ENCODE measurements at regions of chr19 and their contacts with region 1.

Region 1: GRCh38 chr19:37906869-37907734 is at the start of gene SIPA1L3:
- DNase-seq: peak; percentile 88 to 97
- H3K4me3 ChIP-seq: peak within 1 kb of the TSS; percentile 100
- H3K27ac ChIP-seq: peak within 1 kb of the TSS; percentile 67
- H3K4me1 ChIP-seq: peaks cover 18% of the 10 kb centered on the region
- H3K27me3 ChIP-seq: no peaks in the 10 kb centered on the region
- CTCF ChIP-seq: no peak
- total RNA-seq, gene SIPA1L3: 53.4 and 55.2 TPM in 2 replicates

Region 2: DNA sequence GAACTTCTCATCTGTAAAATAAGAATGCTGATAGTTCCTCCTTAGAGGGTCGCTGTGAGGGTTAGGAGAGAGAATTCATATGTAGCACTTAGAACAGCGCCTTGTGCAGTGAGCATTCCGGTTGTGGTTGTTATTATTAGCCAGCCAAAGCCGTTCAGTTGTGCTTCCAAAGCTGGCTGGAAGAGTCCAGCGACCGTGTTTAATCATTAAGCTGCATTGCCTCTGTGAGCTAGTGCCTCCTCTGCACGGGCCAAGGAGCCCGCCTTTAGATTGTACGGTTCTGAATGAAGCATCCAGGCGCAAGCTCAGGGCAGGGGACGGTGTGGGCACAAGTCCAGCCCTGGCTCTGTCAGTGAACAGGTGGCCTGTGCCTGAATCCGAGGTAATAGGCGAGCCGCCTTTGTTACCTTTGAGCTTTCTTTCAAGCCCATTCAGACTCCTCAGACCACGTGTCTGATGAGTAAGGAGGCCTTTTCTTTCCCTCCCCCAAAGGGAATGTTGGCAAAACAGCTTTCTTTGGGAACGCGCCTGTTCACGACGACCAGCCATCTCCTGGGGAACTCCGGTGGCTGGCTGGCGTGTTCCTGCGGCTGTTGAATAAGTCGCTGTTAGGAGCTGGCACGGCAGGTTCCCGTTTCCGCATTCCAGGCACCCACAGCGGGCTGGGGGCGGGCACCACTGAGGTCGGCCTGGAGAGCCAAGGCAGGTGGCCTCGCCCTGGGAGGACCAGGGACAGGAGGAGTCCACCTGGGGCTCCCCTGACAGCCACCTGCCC is 25.0 kb after region 1 on chr19:
- CTCF ChIA-PET with region 1: interaction called, 4 read pairs
- POLR2A ChIA-PET with region 1: interaction called, 9 read pairs
- intact Hi-C with region 1: loop called (anchors 1 kb)
- DNase-seq: peak; percentile 92 to 95
- H3K4me3 ChIP-seq: peak overlapping the region; percentile 44
- H3K27ac ChIP-seq: peak overlapping the region; percentile 74
- H3K4me1 ChIP-seq: peaks cover 62% of the 10 kb centered on the region
- H3K27me3 ChIP-seq: no peaks in the 10 kb centered on the region
- CTCF ChIP-seq: no peak

Region 3: DNA sequence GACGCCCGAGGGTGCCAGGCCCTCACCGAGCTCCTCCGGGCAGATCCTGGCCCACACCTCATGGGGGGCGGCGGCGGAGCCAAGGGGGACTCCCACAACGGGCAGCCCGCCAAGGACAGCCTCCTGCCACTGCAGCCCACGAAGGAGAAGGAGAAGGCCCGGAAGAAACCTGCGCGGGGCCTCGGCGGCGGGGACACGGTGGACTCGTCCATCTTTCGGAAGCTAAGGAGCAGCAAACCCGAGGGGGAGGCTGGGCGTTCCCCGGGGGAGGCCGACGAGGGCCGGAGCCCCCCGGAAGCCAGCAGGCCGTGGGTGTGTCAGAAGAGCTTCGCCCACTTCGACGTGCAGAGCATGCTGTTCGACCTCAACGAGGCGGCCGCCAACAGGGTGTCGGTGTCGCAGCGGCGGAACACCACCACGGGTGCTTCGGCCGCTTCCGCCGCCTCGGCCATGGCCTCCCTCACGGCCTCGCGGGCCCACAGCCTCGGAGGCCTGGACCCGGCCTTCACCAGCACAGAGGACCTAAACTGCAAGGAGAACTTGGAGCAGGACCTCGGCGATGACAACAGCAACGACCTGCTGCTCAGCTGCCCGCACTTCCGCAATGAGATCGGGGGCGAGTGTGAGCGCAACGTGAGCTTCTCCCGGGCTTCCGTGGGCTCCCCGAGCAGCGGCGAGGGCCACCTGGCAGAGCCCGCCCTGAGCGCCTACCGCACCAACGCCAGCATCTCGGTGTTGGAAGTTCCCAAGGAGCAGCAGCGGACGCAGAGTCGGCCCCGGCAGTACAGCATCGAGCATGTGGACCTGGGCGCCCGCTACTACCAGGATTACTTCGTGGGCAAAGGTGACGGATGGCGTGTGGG is 175.4 kb after region 1 on chr19:
- CTCF ChIA-PET with region 1: interaction called, 16 read pairs
- POLR2A ChIA-PET with region 1: no interaction called
- intact Hi-C with region 1: no loop called
- DNase-seq: no peak
- H3K4me3 ChIP-seq: no peak overlapping the region
- H3K27ac ChIP-seq: no peak overlapping the region
- H3K4me1 ChIP-seq: peaks cover 16% of the 10 kb centered on the region
- H3K27me3 ChIP-seq: no peaks in the 10 kb centered on the region
- CTCF ChIP-seq: no peak

Region 4: GRCh38 chr19:38149661-38150061 is 242.6 kb after region 1 on chr19:
- CTCF ChIA-PET with region 1: no interaction called
- POLR2A ChIA-PET with region 1: no interaction called
- intact Hi-C with region 1: loop called (anchors 5 kb)
- DNase-seq: no peak
- H3K4me3 ChIP-seq: no peak overlapping the region
- H3K27ac ChIP-seq: no peak overlapping the region
- H3K4me1 ChIP-seq: no peaks in the 10 kb centered on the region
- H3K27me3 ChIP-seq: no peaks in the 10 kb centered on the region
- CTCF ChIP-seq: no peak

Region 5: GRCh38 chr19:38229585-38230073 is 322.5 kb after region 1 on chr19:
- CTCF ChIA-PET with region 1: interaction called, 9 read pairs
- POLR2A ChIA-PET with region 1: no interaction called
- intact Hi-C with region 1: loop called (anchors 2 kb)
- DNase-seq: peak in 1 of 2 experiments; percentile 56
- H3K4me3 ChIP-seq: no peak overlapping the region
- H3K27ac ChIP-seq: no peak overlapping the region
- H3K4me1 ChIP-seq: 0 out of 2 replicates have a peak, but pooled peaks cover 6% of the 10 kb centered on the region
- H3K27me3 ChIP-seq: peaks cover 14% of the 10 kb centered on the region; the same call in 1 of the 2 replicates
- CTCF ChIP-seq: no peak

Region 6: GRCh38 chr19:38335949-38336637 is 429.0 kb after region 1 on chr19:
- CTCF ChIA-PET with region 1: no interaction called
- POLR2A ChIA-PET with region 1: no interaction called
- intact Hi-C with region 1: loop called (anchors 1 kb)
- DNase-seq: peak; percentile 87 to 95
- H3K4me3 ChIP-seq: peak overlapping the region; percentile 73
- H3K27ac ChIP-seq: peak overlapping the region; percentile 69
- H3K4me1 ChIP-seq: peaks cover 5% of the 10 kb centered on the region
- H3K27me3 ChIP-seq: no peaks in the 10 kb centered on the region
- CTCF ChIP-seq: no peak

Region 7: GRCh38 chr19:38387550-38388348 is 480.6 kb after region 1 on chr19 and contains the start of gene GGN:
- CTCF ChIA-PET with region 1: interaction called, 4 read pairs
- POLR2A ChIA-PET with region 1: interaction called, 10 read pairs
- intact Hi-C with region 1: loop called (anchors 10 kb)
- DNase-seq: peak; percentile 81 to 93
- H3K4me3 ChIP-seq: peak within 1 kb of the TSS; percentile 71
- H3K27ac ChIP-seq: peak within 1 kb of the TSS; percentile 36; the same call in 1 of the 2 replicates
- H3K4me1 ChIP-seq: peaks cover 8% of the 10 kb centered on the region; the same call in 1 of the 2 replicates
- H3K27me3 ChIP-seq: no peaks in the 10 kb centered on the region
- CTCF ChIP-seq: no peak
- total RNA-seq, gene GGN: 1.0 and 2.1 TPM in 2 replicates